ENCODE measurements at regions of chrX and their contacts with region 1.

Region 1: DNA sequence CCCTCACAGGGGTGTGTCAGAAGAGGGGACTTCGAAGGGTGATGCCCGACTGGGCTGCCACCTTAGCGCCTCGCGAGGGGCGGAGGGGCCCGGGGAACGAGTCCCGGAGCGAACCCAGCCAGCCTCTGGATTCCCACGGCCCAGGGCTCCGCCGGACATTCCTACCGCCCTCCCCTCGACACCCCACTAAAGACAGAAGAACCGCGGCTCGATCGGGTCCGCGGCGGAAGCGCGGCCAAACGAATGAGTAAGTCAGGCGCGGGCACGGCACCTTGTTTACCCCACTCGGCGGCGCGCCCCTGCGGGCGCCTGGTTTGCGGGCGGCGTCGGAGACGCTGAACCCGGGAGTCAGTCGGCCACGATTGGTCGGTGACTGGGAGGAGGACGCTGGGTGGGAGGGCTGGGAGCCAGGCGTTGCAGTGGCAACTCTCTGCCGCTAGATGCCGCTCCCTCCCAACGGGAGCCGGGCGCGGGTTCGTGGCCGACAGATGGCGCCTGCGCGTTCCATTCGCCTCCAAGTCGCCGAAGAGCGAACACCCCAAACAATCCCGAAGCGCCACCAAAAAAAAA is 1.4 kb upstream of the STAG2 start:
- DNase-seq: peak; percentile 88 to 92 (median 89)
- H3K4me3 ChIP-seq: peak overlapping the region; percentile 39 to 74
- H3K4me3 Mint-ChIP-seq: peak overlapping the region; percentile 89 to 99 (median 97)
- H3K27ac ChIP-seq: peak overlapping the region; percentile 98
- H3K27ac Mint-ChIP-seq: peak overlapping the region; percentile 97 to 100 (median 98)
- H3K4me1 ChIP-seq: peaks cover 18% of the 10 kb centered on the region
- H3K4me1 Mint-ChIP-seq: peaks cover 9 to 44% (median 16%) of the 10 kb centered on the region in 4 donors
- H3K27me3 ChIP-seq: no peaks in the 10 kb centered on the region
- H3K27me3 Mint-ChIP-seq: peaks cover 0 to 1% of the 10 kb centered on the region in 2 donors

Region 2: DNA sequence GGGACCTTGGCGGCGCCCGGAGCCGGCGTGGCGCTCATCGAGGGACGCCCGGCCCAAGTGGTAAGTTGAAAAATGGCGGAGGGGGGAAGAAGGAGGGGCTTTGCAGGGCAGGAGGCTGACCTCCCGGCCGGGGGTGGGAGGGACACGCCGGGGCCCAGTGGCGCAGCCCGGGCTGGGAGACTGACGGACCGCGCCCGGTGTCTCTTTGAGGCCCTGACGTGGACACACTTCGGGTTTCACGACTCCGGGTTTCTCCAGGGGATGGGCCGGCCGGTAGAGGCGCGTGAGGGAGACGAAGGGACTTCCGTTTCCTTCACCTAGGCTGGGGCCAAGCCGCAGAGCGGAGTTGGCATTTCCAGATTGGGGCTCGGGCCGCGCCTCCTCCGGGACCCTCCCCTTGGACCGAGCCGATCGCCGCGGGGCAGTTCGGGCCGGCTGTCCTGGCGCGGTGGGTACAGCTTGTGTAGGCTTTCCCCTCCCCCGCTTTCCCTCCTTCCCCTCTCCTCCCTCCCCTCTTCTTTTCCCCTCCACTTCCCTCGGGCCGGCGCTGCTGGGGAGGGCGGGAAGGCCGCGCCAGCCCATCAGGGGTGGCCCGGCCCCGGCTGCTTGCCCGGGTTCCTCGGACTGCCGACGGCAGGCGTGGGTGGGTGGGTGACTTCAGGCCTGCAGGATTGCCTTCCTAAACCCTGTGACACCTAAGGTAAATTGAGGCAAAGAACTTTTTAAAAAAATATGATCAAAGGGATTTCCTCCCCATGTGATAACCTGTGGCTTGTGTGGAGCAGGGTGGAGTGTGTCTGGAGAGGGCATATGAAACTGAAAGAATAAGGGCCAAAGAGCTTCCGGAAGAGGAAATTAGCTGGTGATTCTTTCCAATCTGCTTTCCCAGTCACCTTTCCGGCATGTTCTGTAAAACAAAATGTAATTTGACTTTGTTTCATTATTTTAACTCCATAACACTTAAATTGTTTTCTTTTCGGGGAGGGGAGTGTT is 100.0 kb before region 1 on chrX and contains the start of gene XIAP:
- CTCF ChIA-PET with region 1: no interaction called
- POLR2A ChIA-PET with region 1: interaction called, 9 read pairs
- intact Hi-C with region 1: loop called (anchors 2 kb)
- DNase-seq: peak; percentile 63 to 76 (median 68)
- H3K4me3 ChIP-seq: peak within 1 kb of the TSS; percentile 29 to 69
- H3K4me3 Mint-ChIP-seq: peak within 1 kb of the TSS; percentile 86 to 96 (median 94)
- H3K27ac ChIP-seq: peak within 1 kb of the TSS; percentile 81
- H3K27ac Mint-ChIP-seq: peak within 1 kb of the TSS; percentile 96 to 97 (median 97)
- H3K4me1 ChIP-seq: peaks cover 16% of the 10 kb centered on the region
- H3K4me1 Mint-ChIP-seq: peaks cover 7 to 31% (median 18%) of the 10 kb centered on the region in 4 donors
- H3K27me3 ChIP-seq: no peaks in the 10 kb centered on the region
- H3K27me3 Mint-ChIP-seq: no peaks in the 10 kb centered on the region
- total RNA-seq, gene XIAP: 59.9 to 64.6 TPM

Region 3: DNA sequence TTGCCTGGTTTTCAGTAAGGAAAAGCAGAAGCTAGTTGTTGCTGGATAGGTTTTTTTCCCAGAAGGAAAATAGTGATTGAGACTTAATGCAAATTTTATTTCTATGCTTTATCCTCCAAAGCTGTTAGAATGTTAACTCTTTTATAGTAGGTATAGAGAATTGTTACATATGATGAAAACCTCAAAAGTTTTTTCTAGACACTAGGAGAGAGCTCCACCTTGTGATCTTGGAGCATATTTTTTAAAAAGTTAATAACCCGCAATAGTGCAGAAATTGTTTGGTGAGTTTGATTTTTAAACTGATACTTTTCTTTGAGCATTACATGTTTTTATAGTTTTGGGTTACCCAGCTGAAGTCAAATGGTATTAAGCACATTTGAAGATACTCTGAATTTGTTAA is 57.9 kb after region 1 on chrX:
- CTCF ChIA-PET with region 1: interaction called, 13 read pairs
- POLR2A ChIA-PET with region 1: interaction called, 8 read pairs
- intact Hi-C with region 1: loop called (anchors 1 kb)
- DNase-seq: peak in 4 of 5 donors; percentile 7 to 21 (median 15)
- H3K4me3 ChIP-seq: no peak overlapping the region
- H3K4me3 Mint-ChIP-seq: peak overlapping the region in 2 of 8 donors; percentile 1 to 2
- H3K27ac ChIP-seq: no peak overlapping the region
- H3K27ac Mint-ChIP-seq: peak overlapping the region in 3 of 7 donors; percentile 23 to 64 (median 41)
- H3K4me1 ChIP-seq: peaks cover 46% of the 10 kb centered on the region
- H3K4me1 Mint-ChIP-seq: peaks cover 16 to 55% (median 24%) of the 10 kb centered on the region in 4 donors
- H3K27me3 ChIP-seq: no peaks in the 10 kb centered on the region
- H3K27me3 Mint-ChIP-seq: no peaks in the 10 kb centered on the region

Region 4: DNA sequence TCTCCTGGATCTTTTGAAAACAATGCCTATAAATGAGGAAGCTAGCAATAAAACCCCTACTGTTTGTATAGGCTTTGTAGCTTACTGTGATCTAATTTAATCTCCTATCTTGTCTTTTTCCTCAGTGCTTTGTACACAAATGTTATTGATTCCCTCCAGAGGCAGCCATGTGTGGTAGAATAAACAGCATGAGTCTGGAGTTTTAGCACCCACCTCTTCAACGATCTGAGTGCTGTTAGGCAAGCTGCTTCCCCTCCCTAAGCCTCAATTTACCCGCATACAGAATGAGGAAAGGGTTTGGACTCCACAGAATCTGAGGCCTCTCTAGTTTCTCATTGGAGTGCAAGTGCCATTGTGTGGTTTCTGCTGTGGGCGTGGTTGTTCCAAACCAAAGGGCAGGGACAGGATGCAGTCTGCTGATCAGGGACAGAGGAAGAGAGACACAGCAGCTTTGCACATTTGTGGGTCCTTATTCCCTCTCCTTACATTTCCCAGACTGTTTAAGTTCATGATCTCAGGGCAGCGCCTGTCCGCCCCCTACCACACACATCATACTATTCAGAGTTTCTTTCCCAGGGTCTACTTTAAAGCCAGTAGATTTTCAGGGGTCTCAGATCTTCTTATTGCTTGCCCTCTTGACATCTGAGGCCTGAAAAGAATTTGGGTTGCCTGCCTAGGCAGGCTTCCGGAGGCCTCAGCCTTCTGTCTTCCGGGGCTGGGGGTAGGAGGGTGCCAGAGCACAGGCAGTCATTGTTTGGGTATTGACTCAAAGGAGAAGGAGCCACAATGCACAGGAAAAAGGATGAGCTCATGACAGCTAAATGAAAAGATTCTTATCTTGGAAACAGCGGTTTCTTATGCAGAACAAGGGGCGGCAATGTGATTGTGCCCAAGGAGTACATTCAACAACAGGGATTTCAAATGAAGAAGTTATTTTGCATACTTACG is 257.5 kb after region 1 on chrX:
- CTCF ChIA-PET with region 1: no interaction called
- POLR2A ChIA-PET with region 1: interaction called, 11 read pairs
- intact Hi-C with region 1: loop called (anchors 2 kb)
- DNase-seq: peak; percentile 75 to 89 (median 80)
- H3K4me3 ChIP-seq: peak overlapping the region in 1 of 2 donors; percentile 1
- H3K4me3 Mint-ChIP-seq: peak overlapping the region; percentile 57 to 82 (median 76)
- H3K27ac ChIP-seq: peak overlapping the region; percentile 59
- H3K27ac Mint-ChIP-seq: peak overlapping the region; percentile 84 to 95 (median 90)
- H3K4me1 ChIP-seq: peaks cover 73% of the 10 kb centered on the region
- H3K4me1 Mint-ChIP-seq: peaks cover 56 to 95% (median 77%) of the 10 kb centered on the region in 4 donors
- H3K27me3 ChIP-seq: no peaks in the 10 kb centered on the region
- H3K27me3 Mint-ChIP-seq: no peaks in the 10 kb centered on the region

Region 5: GRCh38 chrX:124388562-124388961 is 428.4 kb after region 1 on chrX:
- CTCF ChIA-PET with region 1: interaction called, 3 read pairs
- POLR2A ChIA-PET with region 1: no interaction called
- intact Hi-C with region 1: loop called (anchors 10 kb)
- DNase-seq: peak; percentile 35 to 58 (median 53)
- H3K4me3 ChIP-seq: no peak overlapping the region
- H3K4me3 Mint-ChIP-seq: no peak overlapping the region
- H3K27ac ChIP-seq: no peak overlapping the region
- H3K27ac Mint-ChIP-seq: peak overlapping the region in 1 of 7 donors; percentile 42
- H3K4me1 ChIP-seq: no peaks in the 10 kb centered on the region
- H3K4me1 Mint-ChIP-seq: peaks cover 1 to 12% (median 8%) of the 10 kb centered on the region in 4 donors
- H3K27me3 ChIP-seq: no peaks in the 10 kb centered on the region
- H3K27me3 Mint-ChIP-seq: no peaks in the 10 kb centered on the region

Region 6: DNA sequence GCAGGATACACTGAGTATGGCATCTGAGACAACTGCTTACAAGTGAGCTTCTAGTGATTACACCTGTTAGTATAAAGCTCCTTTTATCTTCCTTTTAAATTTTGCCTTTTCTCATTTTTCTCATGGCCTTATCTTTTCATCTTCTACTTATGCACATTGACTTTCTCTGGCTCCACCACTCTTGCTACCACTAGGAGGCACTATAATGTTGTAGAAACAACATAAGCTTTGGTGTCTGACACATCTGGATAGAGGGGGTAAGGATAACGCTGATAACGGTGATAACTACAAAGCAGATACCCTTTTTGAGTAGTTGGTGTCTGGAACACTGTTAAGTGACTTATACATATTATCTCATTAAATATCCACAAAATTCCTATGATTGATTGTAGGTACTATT is 1172.2 kb after region 1 on chrX:
- CTCF ChIA-PET with region 1: no interaction called
- POLR2A ChIA-PET with region 1: no interaction called
- intact Hi-C with region 1: loop called (anchors 5 kb)
- DNase-seq: peak in 2 of 5 donors; percentile 1 to 2
- H3K4me3 ChIP-seq: no peak overlapping the region
- H3K4me3 Mint-ChIP-seq: no peak overlapping the region
- H3K27ac ChIP-seq: no peak overlapping the region
- H3K27ac Mint-ChIP-seq: no peak overlapping the region
- H3K4me1 ChIP-seq: no peaks in the 10 kb centered on the region
- H3K4me1 Mint-ChIP-seq: no peaks in the 10 kb centered on the region
- H3K27me3 ChIP-seq: no peaks in the 10 kb centered on the region
- H3K27me3 Mint-ChIP-seq: no peaks in the 10 kb centered on the region